Activated CD4-positive, alpha-beta T cell treated with anti-CD3 and anti-CD28 coated beads for 36 hours (primary cell): ENCODE measurements at regions of chr9 and their contacts with region 1.

Region 1: GRCh38 chr9:128026773-128027541 is 40.2 kb downstream of the NAIF1 start:
- DNase-seq: peak; percentile 79
- ATAC-seq: peak; percentile 62
- H3K4me3 Mint-ChIP-seq: peak overlapping the region; percentile 65
- H3K27ac Mint-ChIP-seq: peak overlapping the region; percentile 94
- H3K4me1 Mint-ChIP-seq: peaks cover 91% of the 10 kb centered on the region
- H3K27me3 Mint-ChIP-seq: peaks cover 2% of the 10 kb centered on the region

Region 2: GRCh38 chr9:127970401-127971313 is 56.3 kb before region 1 on chr9:
- CTCF ChIA-PET with region 1: interaction called, 55 read pairs
- POLR2A ChIA-PET with region 1: interaction called, 3 read pairs
- intact Hi-C with region 1: loop called (anchors 1 kb)
- DNase-seq: peak; percentile 87
- ATAC-seq: peak; percentile 76
- H3K4me3 Mint-ChIP-seq: peak overlapping the region; percentile 69
- H3K27ac Mint-ChIP-seq: peak overlapping the region; percentile 92
- H3K4me1 Mint-ChIP-seq: peaks cover 97% of the 10 kb centered on the region
- H3K27me3 Mint-ChIP-seq: no peaks in the 10 kb centered on the region

Region 3: GRCh38 chr9:128007566-128008138 is 19.3 kb before region 1 on chr9:
- CTCF ChIA-PET with region 1: interaction called, 5 read pairs
- POLR2A ChIA-PET with region 1: interaction called, 3 read pairs
- intact Hi-C with region 1: loop called (anchors 1 kb)
- DNase-seq: peak; percentile 96
- ATAC-seq: peak; percentile 86
- H3K4me3 Mint-ChIP-seq: peak overlapping the region; percentile 81
- H3K27ac Mint-ChIP-seq: peak overlapping the region; percentile 93
- H3K4me1 Mint-ChIP-seq: peaks cover 49% of the 10 kb centered on the region
- H3K27me3 Mint-ChIP-seq: no peaks in the 10 kb centered on the region